RWPE1 (cell line): ENCODE measurements at regions of chr5 and their contacts with region 1.

Region 1: GRCh38 chr5:112995764-112996618 is 19.4 kb downstream of the DCP2 start:
- DNase-seq: peak; percentile 76
- H3K27ac ChIP-seq: no peak overlapping the region
- CTCF ChIP-seq: peak; percentile 97

Region 2: DNA sequence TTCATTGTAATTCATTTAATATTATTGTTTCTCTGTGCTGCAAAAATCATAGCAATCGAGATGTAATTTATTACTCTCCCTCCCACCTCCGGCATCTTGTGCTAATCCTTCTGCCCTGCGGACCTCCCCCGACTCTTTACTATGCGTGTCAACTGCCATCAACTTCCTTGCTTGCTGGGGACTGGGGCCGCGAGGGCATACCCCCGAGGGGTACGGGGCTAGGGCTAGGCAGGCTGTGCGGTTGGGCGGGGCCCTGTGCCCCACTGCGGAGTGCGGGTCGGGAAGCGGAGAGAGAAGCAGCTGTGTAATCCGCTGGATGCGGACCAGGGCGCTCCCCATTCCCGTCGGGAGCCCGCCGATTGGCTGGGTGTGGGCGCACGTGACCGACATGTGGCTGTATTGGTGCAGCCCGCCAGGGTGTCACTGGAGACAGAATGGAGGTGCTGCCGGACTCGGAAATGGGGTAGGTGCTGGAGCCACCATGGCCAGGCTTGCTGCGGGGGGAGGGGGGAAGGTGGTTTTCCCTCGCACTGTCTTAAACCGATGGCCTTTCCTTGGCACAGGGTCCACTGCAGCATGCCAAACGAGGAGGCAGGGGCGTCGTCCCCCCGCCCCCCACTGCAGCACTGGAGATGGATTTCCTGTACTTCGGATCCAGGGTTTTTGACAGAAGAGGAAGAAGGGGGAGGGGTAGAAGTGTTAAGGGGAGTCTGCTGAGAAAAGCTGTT is 258.4 kb before region 1 on chr5 and contains the start of gene APC:
- CTCF ChIA-PET with region 1: no interaction called
- POLR2A ChIA-PET with region 1: no interaction called
- DNase-seq: peak; percentile 96
- H3K27ac ChIP-seq: peak within 1 kb of the TSS; percentile 67
- CTCF ChIP-seq: no peak

Region 3: DNA sequence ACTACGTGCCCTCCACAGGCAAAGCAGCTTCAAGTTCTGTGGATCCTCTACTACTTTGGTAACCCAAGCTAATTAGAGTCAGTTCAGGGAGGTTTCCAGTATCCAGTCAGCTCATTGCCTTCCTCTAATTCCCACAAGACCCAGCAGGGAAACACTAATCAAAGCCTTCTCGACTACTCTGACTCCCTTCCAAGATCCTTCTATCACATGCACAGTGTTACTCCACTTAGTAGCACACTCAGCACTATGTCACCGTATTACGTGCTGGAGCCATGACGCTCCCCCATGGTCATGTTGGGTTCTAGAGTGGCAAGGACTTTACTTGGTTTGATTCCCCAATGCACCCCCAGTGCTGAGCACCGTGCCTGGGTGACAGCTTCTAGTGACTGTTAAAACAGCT is 33.6 kb after region 1 on chr5:
- CTCF ChIA-PET with region 1: interaction called, 10 read pairs
- POLR2A ChIA-PET with region 1: no interaction called
- DNase-seq: no peak
- H3K27ac ChIP-seq: no peak overlapping the region
- CTCF ChIP-seq: no peak

Region 4: GRCh38 chr5:113330533-113331208 is 334.7 kb after region 1 on chr5:
- CTCF ChIA-PET with region 1: interaction called, 10 read pairs
- POLR2A ChIA-PET with region 1: no interaction called
- DNase-seq: peak; percentile 78
- H3K27ac ChIP-seq: peak overlapping the region; percentile 61
- CTCF ChIP-seq: peak; percentile 68

Region 5: DNA sequence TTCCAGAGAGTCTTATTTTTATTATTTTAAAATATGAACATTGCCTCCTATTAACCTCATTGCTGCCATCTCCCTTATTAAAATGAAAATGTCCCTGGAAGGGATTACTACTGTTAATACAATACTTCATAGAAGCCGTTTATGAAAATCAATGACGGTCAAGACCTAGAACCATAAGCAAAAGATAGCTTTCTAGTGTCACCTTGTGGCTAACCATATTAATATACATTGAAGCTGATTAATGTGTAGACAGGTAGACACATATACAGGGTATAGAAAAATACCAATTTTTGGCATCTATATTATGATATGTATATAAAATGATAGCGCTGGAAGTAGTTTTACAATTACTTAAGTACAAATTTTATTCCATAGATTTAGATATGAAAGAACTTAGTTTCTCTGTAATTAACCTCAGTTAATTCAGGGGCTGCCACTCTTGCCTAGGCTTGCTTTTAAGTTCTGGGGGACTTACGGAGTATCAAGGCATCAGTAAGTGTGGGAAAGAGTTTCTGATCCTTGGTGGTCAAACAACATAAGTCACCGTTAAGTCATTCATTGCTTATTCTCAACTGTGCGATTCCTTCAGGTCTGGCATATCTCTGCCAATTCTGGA is 515.0 kb after region 1 on chr5:
- CTCF ChIA-PET with region 1: interaction called, 14 read pairs
- POLR2A ChIA-PET with region 1: interaction called, 3 read pairs
- DNase-seq: peak; percentile 53
- H3K27ac ChIP-seq: no peak overlapping the region
- CTCF ChIP-seq: peak; percentile 90